HEK293T (cell line): ENCODE measurements at regions of chr6 and their contacts with region 1.

Region 1: GRCh38 chr6:44397424-44398164 is 10.1 kb downstream of the CDC5L start:
- DNase-seq: no peak

Region 2: DNA sequence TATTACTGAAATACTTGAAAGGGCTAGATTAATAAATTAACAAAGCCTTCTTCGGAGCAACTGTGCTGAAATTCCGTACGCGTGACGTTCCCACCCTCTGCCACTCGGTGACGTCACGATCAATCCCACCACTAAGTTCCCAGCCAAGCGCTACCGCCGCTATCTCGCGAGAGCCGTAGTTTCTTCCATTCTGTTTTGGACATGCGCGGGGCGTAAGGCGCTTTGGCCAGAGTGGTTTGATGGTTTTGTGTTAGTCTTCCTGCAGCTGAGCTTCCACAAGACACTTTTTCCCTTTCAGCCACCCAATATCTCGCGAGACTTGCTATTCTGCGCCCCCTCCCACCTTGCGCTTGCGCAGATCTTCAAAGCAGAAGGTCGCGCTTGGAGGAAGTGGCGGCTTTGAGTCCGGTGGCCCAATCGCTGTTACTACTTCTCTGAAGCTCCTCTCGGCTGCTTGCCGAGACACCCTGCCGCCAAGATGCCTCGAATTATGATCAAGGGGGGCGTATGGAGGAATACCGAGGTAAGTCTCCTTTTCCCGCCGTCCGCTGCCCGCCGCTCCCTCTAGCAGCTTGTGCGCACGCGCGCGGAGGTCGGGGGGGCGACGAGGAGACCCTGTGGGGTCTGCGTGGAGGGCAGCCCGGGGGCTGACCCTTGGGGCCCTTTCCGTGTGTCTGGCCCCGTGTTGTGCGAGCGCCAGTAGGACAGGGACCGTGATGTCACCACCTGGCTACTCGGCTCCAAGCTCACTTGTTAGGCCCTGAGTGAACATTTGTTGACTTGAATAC is 10.1 kb before region 1 on chr6 and contains the start of gene CDC5L:
- CTCF ChIA-PET with region 1: no interaction called
- POLR2A ChIA-PET with region 1: interaction called, 20 read pairs
- DNase-seq: peak; percentile 96